GM12878 (cell line): ENCODE measurements at regions of chr17 and their contacts with region 1.

Region 1: DNA sequence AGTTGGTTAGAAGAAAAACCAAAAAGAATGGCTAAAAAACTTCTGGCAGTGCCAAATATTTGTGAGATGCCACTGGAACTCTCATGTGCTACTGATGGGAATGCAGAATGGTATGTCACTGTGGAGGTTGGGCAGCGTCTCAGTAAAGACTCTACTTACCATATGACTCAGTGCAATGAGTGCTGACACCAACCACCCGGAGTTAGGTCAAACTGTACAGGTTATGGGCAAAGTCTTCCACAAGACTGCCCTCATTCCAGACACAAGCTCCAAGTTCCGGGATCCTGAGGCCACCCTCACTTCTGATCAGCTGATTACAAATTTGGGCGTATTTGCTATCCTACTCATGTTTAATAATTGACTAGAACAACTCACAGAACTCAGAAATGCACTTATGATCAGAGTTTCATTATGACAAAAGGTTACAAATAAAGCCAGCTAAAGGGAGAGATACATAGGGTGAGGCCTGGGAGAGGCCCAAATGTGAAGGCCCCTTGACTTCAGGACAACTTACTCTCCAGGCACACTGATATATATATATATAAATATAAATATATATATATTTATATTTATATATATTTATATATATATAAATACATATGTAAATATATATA is 114.9 kb downstream of the TRIM37 start:
- DNase-seq: peak; percentile 39
- ATAC-seq: peak; percentile 96
- H3K4me3 ChIP-seq: no peak overlapping the region
- H3K27ac ChIP-seq: no peak overlapping the region
- H3K4me1 ChIP-seq: peaks cover 6% of the 10 kb centered on the region
- H3K27me3 ChIP-seq: no peaks in the 10 kb centered on the region
- CTCF ChIP-seq: no peak
- EP300 ChIP-seq: no peak
- POLR2A ChIP-seq: no peak
- RAD21 ChIP-seq: no peak

Region 2: GRCh38 chr17:58974354-58974753 is 17.5 kb before region 1 on chr17:
- CTCF ChIA-PET with region 1: interaction called, 12 read pairs
- POLR2A ChIA-PET with region 1: interaction called, 5 read pairs
- RAD21 ChIA-PET with region 1: interaction called, 8 read pairs
- SMC1A ChIA-PET with region 1: interaction called, 14 read pairs
- in situ Hi-C with region 1: no loop called
- intact Hi-C with region 1: no loop called
- DNase-seq: no peak
- ATAC-seq: peak; percentile 38; the same call in 2 of the 3 replicates
- H3K4me3 ChIP-seq: no peak overlapping the region
- H3K27ac ChIP-seq: no peak overlapping the region; the same call in 1 of the 2 replicates
- H3K4me1 ChIP-seq: peaks cover 13% of the 10 kb centered on the region
- H3K27me3 ChIP-seq: no peaks in the 10 kb centered on the region
- CTCF ChIP-seq: no peak
- EP300 ChIP-seq: no peak
- POLR2A ChIP-seq: no peak
- RAD21 ChIP-seq: no peak

Region 3: GRCh38 chr17:58980706-58981481 is 10.9 kb before region 1 on chr17:
- CTCF ChIA-PET with region 1: interaction called, 12 read pairs
- POLR2A ChIA-PET with region 1: interaction called, 3 read pairs
- RAD21 ChIA-PET with region 1: interaction called, 3 read pairs
- SMC1A ChIA-PET with region 1: interaction called, 12 read pairs
- in situ Hi-C with region 1: no loop called
- intact Hi-C with region 1: no loop called
- DNase-seq: no peak
- ATAC-seq: no peak
- H3K4me3 ChIP-seq: no peak overlapping the region
- H3K27ac ChIP-seq: no peak overlapping the region
- H3K4me1 ChIP-seq: 0 out of 2 replicates have a peak, but pooled peaks cover 3% of the 10 kb centered on the region
- H3K27me3 ChIP-seq: no peaks in the 10 kb centered on the region
- CTCF ChIP-seq: no peak
- EP300 ChIP-seq: no peak
- POLR2A ChIP-seq: no peak
- RAD21 ChIP-seq: no peak

Region 4: GRCh38 chr17:59361916-59362810 is 370.3 kb after region 1 on chr17:
- CTCF ChIA-PET with region 1: no interaction called
- POLR2A ChIA-PET with region 1: no interaction called
- RAD21 ChIA-PET with region 1: no interaction called
- SMC1A ChIA-PET with region 1: no interaction called
- in situ Hi-C with region 1: no loop called
- intact Hi-C with region 1: no loop called
- DNase-seq: peak; percentile 86
- ATAC-seq: peak; percentile 79
- H3K4me3 ChIP-seq: peak overlapping the region; percentile 40; the same call in 1 of the 2 replicates
- H3K27ac ChIP-seq: peak overlapping the region; percentile 54
- H3K4me1 ChIP-seq: peaks cover 50% of the 10 kb centered on the region
- H3K27me3 ChIP-seq: no peaks in the 10 kb centered on the region
- CTCF ChIP-seq: no peak
- EP300 ChIP-seq: 0 out of 4 replicates have a peak, but pooled peaks of 1 of the 2 experiments have one; percentile 48
- POLR2A ChIP-seq: no peak
- RAD21 ChIP-seq: no peak